Calu3 (cell line): ENCODE measurements at regions of chr2 and their contacts with region 1.

Region 1: GRCh38 chr2:28594289-28595108 is 98.6 kb downstream of the PLB1 start:
- DNase-seq: peak; percentile 94
- H3K4me3 Mint-ChIP-seq: peak overlapping the region; percentile 33
- H3K27ac Mint-ChIP-seq: peak overlapping the region; percentile 98
- H3K4me1 Mint-ChIP-seq: peaks cover 36% of the 10 kb centered on the region
- H3K27me3 Mint-ChIP-seq: no peaks in the 10 kb centered on the region
- CTCF ChIP-seq: peak; percentile 78

Region 2: DNA sequence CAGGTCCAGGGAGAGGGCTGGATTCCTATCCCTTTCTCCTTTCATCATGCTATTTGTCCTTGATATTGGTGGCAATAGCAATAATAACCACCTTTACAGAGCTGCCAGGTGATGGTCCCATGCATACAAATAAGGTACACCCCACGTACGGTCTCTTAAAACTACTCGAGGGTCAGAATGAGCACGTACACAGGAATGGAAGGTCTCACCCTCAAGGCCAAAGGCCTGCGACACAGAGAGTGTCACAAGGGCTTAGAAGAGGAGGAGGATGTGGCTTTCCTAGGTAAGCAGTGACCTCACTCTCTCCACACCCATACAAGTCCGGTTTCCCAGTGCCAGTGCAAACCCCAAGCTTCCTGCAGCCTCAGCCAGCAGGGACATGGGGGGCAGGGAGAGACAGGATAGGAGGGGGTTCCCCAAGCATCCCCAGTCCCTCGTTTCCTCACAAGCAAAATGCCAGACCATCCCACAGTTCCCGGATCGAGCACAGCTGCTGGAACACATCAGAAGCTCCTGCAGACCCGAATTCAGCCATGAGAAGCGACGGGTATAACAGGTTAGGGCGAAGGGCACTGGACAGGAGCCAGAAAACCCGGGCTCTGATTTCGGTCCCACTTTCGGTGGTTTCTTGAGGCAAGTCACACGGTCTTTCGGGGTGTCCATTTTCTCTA is 49.4 kb before region 1 on chr2:
- CTCF ChIA-PET with region 1: no interaction called
- intact Hi-C with region 1: no loop called
- DNase-seq: peak; percentile 35
- H3K4me3 Mint-ChIP-seq: peak overlapping the region; percentile 6
- H3K27ac Mint-ChIP-seq: peak overlapping the region; percentile 55
- H3K4me1 Mint-ChIP-seq: peaks cover 14% of the 10 kb centered on the region
- H3K27me3 Mint-ChIP-seq: peaks cover 1% of the 10 kb centered on the region
- CTCF ChIP-seq: no peak

Region 3: DNA sequence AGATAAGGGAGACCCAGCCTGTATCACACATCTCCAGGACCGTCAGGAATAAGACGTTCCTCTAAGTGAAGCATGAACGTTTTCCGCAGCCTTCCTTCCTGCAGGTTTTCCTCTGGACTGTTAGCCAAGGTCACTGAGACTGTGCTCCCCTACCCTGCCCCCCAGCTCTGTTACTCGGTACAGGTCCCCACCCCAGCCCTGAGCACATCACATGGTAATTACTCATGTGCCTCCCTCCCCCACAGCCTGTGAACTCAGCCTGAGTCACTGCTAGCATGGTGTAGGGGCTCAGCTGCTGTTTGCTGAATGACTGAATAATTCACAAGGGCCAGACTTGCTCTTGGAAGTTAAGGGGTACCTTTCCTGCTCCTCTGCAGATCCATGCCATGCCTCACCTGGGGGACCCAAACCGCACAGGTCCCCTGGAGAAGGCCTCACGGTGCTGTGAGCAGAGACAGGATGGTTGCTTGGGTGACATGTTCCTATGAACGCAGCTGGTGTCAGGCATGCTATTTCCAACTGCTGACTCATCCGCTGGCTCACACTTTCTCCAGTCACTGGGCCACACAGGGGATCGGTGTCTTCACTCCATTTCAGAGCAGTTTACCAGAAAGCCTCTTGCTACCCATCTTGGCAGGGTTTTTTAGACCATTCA is 10.5 kb before region 1 on chr2:
- CTCF ChIA-PET with region 1: interaction called, 22 read pairs
- intact Hi-C with region 1: no loop called
- DNase-seq: peak; percentile 86
- H3K4me3 Mint-ChIP-seq: no peak overlapping the region
- H3K27ac Mint-ChIP-seq: peak overlapping the region; percentile 88
- H3K4me1 Mint-ChIP-seq: peaks cover 20% of the 10 kb centered on the region
- H3K27me3 Mint-ChIP-seq: no peaks in the 10 kb centered on the region
- CTCF ChIP-seq: no peak

Region 4: GRCh38 chr2:28621172-28622100 is 26.9 kb after region 1 on chr2:
- CTCF ChIA-PET with region 1: interaction called, 24 read pairs
- intact Hi-C with region 1: no loop called
- DNase-seq: peak; percentile 84
- H3K4me3 Mint-ChIP-seq: peak overlapping the region; percentile 61
- H3K27ac Mint-ChIP-seq: peak overlapping the region; percentile 99
- H3K4me1 Mint-ChIP-seq: peaks cover 69% of the 10 kb centered on the region
- H3K27me3 Mint-ChIP-seq: no peaks in the 10 kb centered on the region
- CTCF ChIP-seq: peak; percentile 67

Region 5: DNA sequence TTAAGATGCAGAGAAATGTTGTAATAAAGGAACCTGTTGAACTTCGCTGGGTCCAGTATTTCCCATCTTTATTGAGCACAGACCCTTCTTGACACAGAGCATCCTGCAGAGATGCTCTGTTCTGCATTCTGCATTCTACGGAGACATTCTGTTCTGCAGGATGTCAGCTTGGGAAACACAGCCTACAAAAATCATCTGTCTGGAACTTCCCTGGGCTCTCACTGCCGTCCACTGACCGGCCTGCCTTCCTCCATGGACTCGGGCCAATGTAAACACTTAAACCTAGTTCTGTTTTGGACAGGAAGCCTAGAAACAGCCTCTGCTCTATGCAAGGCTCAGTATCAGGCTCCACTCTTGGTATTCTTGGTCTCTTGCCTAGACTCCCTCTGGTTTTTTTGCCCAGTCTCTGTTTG is 67.1 kb after region 1 on chr2:
- CTCF ChIA-PET with region 1: interaction called, 17 read pairs
- intact Hi-C with region 1: no loop called
- DNase-seq: peak; percentile 68
- H3K4me3 Mint-ChIP-seq: peak overlapping the region; percentile 36
- H3K27ac Mint-ChIP-seq: peak overlapping the region; percentile 91
- H3K4me1 Mint-ChIP-seq: peaks cover 62% of the 10 kb centered on the region
- H3K27me3 Mint-ChIP-seq: no peaks in the 10 kb centered on the region
- CTCF ChIP-seq: no peak